Transverse colon (tissue), 4 donors: ENCODE measurements at regions of chr19 and their contacts with region 1.

Region 1: DNA sequence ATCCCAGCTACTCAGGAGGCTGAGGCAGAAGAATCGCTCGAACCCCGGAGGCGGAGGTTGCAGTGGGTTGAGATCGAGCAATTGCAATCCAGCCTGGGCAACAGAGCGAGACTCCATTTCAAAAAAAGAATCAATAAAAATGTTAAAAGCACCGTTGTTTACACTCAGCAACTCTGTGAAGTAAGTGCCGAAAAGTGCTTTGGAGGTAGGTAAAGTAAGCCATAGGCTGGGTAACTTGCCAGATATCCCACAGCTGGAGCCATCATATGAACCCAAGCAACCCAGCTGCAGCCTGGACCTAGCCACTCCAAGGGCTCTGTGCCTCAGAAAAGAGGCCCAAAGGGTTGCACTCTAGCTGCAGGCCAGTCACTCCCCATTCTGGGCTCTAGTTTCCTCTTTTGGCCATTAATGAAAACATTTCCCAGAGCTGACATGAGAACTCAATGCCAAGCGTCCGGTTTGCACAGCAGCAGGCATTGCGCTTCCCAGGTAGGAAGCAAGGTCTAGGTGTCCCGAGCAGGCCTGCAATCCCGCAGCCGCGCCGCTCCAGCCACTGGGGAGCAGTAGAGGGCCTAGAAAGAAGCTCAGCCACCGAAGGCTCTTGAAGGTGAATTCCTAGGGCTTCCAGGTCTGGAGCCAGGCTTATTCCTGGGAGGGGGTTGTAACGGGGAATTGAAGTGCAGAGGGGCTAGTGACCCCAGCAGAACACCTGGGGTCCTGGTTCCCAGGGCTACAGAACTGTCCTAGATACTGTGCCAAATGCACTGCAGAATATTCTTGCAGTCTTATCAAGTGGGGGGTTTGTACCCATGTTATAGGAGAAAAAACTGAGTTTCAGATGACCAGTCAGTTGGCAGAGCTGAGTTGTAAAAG is 4.1 kb upstream of the CD79A start:
- DNase-seq: peak; percentile 87
- H3K4me3 ChIP-seq: no peak overlapping the region
- H3K27ac ChIP-seq: peak overlapping the region; percentile 42 to 60 (median 52)
- H3K4me1 ChIP-seq: peaks cover 4 to 56% (median 22%) of the 10 kb centered on the region in 4 donors
- H3K27me3 ChIP-seq: no peaks in the 10 kb centered on the region
- CTCF ChIP-seq: peak; percentile 60 to 84 (median 74)
- EP300 ChIP-seq: no peak
- POLR2A ChIP-seq: peak; percentile 6

Region 2: DNA sequence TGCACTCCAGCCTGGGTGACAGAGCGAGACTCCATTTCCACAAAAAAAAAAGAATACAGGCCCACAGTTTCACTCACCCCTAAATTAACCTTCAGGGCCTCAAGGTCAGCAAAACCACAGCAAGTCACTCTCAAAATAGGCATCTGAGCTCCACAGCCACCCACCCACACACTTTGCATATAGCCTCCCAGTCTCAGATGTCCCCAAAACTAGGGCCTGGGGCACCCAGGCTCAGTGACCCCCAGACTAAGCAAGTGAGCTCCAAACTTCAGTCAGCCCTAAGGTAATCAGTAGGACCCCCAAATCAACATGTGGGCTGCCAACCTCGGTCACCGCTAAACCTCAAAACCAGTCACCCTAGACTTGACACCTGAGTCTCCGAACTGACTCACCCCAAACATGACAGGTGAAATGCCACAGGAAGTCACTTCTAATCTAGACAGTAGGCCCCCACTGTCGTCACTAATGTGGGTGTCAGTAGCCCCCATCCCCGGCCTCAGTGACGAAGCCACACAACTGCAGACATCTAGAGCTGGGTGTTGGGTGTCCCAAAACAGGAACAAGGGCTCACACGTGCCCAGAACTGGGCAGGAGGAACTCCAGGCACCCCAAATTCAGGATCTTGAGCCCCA is 72.2 kb after region 1 on chr19:
- in situ Hi-C with region 1: loop called in 3 of 4 experiments (anchors 5 to 10 kb)
- intact Hi-C with region 1: no loop called
- DNase-seq: peak; percentile 83
- H3K4me3 ChIP-seq: no peak overlapping the region
- H3K27ac ChIP-seq: peak overlapping the region in 3 of 4 donors; percentile 34 to 64 (median 45)
- H3K4me1 ChIP-seq: peaks cover 6 to 20% (median 10%) of the 10 kb centered on the region in 4 donors
- H3K27me3 ChIP-seq: peaks cover 12% of the 10 kb centered on the region
- CTCF ChIP-seq: no peak
- EP300 ChIP-seq: no peak
- POLR2A ChIP-seq: no peak

Region 3: DNA sequence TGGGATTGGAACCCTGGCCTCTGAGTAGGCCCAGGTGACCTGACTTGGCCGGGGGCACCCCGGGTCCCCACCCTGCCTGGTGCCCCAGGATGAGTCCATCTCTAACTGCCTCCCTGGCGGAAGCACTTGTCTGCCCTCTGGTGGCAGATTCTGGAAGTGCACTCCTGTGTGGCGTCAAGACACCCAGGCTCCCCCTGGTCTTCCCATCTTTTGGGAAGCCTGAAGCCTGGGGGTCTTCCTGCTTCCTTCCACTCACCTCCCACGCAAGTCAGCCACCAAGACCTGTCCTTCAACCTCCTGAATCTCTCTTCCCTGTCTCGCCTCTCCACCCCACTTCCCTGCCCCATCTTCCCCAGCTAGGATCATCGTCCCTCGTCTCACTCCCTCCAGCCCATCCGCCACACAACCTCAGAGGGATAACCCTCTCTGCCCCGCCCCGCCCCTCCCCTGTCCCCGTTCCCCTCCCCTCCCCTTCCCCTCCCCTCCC is 78.7 kb after region 1 on chr19:
- in situ Hi-C with region 1: loop called in 3 of 4 experiments (anchors 5 to 10 kb)
- intact Hi-C with region 1: loop called (anchors 5 kb)
- DNase-seq: peak; percentile 89
- H3K4me3 ChIP-seq: no peak overlapping the region
- H3K27ac ChIP-seq: no peak overlapping the region
- H3K4me1 ChIP-seq: peaks cover 0 to 10% (median 5%) of the 10 kb centered on the region in 4 donors
- H3K27me3 ChIP-seq: no peaks in the 10 kb centered on the region
- CTCF ChIP-seq: peak; percentile 96 to 100 (median 99)
- EP300 ChIP-seq: no peak
- POLR2A ChIP-seq: no peak

Region 4: GRCh38 chr19:41959056-41960053 is 86.3 kb after region 1 on chr19 and contains the start of gene RABAC1:
- in situ Hi-C with region 1: loop called in 2 of 4 experiments (anchors 5 to 10 kb)
- intact Hi-C with region 1: loop called (anchors 5 kb)
- DNase-seq: peak; percentile 93
- H3K4me3 ChIP-seq: peak within 1 kb of the TSS; percentile 87 to 96 (median 94)
- H3K27ac ChIP-seq: peak within 1 kb of the TSS; percentile 95 to 97 (median 97)
- H3K4me1 ChIP-seq: peaks cover 10 to 31% (median 15%) of the 10 kb centered on the region in 4 donors
- H3K27me3 ChIP-seq: no peaks in the 10 kb centered on the region
- CTCF ChIP-seq: peak in 2 of 5 experiments; percentile 29 to 37
- EP300 ChIP-seq: no peak
- POLR2A ChIP-seq: no peak
- total RNA-seq, gene RABAC1: 75.6 to 235 (median 165) TPM